Mammary epithelial cell (primary cell): ENCODE measurements at regions of chr14 and their contacts with region 1.

Region 1: DNA sequence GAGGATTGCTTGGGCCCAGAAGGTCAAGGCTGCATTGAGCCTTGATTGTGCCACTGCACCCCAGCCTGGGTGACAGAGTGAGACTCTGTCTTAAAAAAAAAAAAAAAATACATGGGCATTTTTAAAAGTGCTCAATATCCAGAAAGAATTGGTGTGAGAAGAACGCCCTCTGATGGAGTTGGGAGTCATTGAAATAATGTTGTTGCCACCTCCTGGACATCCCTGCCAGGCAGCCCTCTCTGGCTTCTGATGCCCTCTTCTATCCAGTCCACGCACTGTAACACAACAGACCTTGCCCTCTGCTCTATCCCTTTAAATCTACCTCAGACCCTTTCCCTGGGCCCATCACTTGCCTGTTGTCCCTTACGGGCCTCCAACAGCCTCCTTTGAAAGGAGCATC is 4.9 kb downstream of the PTGDR start:
- DNase-seq: peak; percentile 14
- H3K4me3 ChIP-seq: no peak overlapping the region
- H3K27ac ChIP-seq: no peak overlapping the region
- H3K4me1 ChIP-seq: peaks cover 6% of the 10 kb centered on the region
- H3K27me3 ChIP-seq: peaks cover 22% of the 10 kb centered on the region
- CTCF ChIP-seq: peak; percentile 27 to 45

Region 2: DNA sequence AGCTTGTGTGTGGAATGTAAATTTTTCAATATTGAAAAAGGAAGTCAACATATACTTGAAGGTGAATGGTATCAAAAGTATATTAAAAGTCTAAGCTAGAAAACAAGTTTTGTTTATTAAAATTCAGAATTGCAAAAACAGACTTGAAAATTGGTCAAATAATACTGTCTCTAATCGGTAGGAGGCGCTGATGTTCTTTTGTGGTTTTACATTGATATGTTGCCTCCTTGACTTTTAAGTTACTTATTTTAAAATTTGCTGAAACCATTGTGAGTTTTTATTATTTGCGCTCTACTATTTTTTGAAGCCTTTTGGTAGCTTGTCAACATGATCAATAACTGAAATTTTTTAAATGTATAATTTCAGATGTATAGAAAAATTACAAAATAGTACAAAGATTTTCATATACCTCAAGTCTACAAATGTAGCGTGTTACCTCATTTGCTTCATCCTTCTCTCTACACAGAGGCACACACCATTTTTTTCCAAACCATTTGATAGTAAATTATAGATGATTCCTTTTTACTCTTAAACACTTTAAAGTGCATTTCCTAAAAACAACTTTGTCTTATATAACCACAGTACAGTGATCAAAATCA is 276.1 kb before region 1 on chr14:
- CTCF ChIA-PET with region 1: no interaction called
- dilution Hi-C with region 1: no loop called
- in situ Hi-C with region 1: no loop called
- intact Hi-C with region 1: loop called (anchors 2 kb)
- DNase-seq: no peak
- H3K4me3 ChIP-seq: no peak overlapping the region
- H3K27ac ChIP-seq: no peak overlapping the region
- H3K4me1 ChIP-seq: no peaks in the 10 kb centered on the region
- H3K27me3 ChIP-seq: no peaks in the 10 kb centered on the region
- CTCF ChIP-seq: peak; percentile 27 to 48

Region 3: DNA sequence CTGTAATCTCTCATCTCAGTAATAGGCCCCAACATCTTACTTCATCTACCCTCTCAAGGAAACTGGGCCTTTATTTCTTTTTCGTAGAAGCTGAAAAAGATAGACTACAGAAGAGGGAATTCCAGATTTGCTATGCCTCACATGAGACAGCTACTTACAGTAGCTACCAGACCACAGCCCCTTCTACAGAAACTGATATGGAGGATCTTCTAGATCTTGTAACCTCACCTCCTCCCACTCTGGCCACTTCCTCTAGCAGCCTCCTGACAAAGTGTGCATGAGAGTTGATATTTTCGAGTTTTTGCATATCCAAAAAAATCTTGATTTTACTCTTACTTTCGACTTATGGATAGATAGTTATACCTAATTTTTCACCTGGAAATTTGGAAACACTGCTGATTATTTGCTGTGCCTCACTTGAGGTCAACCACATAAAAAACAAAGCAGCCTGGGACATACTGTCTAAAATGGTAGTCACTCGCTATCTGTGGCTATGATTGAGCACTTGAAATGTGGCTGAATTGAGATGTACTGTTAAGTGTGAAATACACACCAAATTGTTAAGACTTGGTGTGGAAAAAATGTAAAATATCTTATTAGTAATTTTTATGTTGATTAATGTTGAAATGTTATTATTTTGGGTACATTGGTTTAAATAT is 117.3 kb before region 1 on chr14:
- CTCF ChIA-PET with region 1: no interaction called
- dilution Hi-C with region 1: no loop called
- in situ Hi-C with region 1: no loop called
- intact Hi-C with region 1: no loop called
- DNase-seq: no peak
- H3K4me3 ChIP-seq: no peak overlapping the region
- H3K27ac ChIP-seq: no peak overlapping the region
- H3K4me1 ChIP-seq: no peaks in the 10 kb centered on the region
- H3K27me3 ChIP-seq: peaks cover 4% of the 10 kb centered on the region
- CTCF ChIP-seq: no peak

Region 4: GRCh38 chr14:52286661-52287649 is 14.6 kb after region 1 on chr14:
- CTCF ChIA-PET with region 1: no interaction called
- dilution Hi-C with region 1: no loop called
- in situ Hi-C with region 1: no loop called
- intact Hi-C with region 1: no loop called
- DNase-seq: no peak
- H3K4me3 ChIP-seq: no peak overlapping the region
- H3K27ac ChIP-seq: no peak overlapping the region
- H3K4me1 ChIP-seq: no peaks in the 10 kb centered on the region
- H3K27me3 ChIP-seq: peaks cover 3% of the 10 kb centered on the region
- CTCF ChIP-seq: no peak

Region 5: DNA sequence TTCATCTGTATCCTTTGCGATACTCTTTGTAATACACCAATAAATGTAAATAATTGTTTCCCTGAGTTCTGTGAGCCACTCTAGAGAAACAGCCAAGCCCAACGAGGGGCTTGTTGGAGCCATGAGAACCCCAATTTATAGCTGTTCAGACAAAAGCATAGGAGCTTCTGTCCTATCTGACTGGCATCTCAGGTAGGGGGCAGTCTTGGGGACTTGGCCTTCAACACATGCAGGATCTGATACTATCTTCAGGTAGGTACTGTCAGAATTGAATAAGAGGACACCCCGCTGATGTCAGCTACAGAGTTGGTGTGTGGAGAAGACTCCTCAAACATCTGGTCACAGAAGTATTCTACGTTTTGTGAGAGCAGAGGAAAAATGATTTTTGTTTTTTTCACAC is 254.7 kb after region 1 on chr14:
- CTCF ChIA-PET with region 1: no interaction called
- dilution Hi-C with region 1: no loop called
- in situ Hi-C with region 1: no loop called
- intact Hi-C with region 1: no loop called
- DNase-seq: no peak
- H3K4me3 ChIP-seq: no peak overlapping the region
- H3K27ac ChIP-seq: no peak overlapping the region
- H3K4me1 ChIP-seq: no peaks in the 10 kb centered on the region
- H3K27me3 ChIP-seq: no peaks in the 10 kb centered on the region
- CTCF ChIP-seq: no peak

Region 6: GRCh38 chr14:52987514-52987913 is 715.1 kb after region 1 on chr14:
- CTCF ChIA-PET with region 1: no interaction called
- dilution Hi-C with region 1: no loop called
- in situ Hi-C with region 1: no loop called
- intact Hi-C with region 1: no loop called
- DNase-seq: no peak
- H3K4me3 ChIP-seq: no peak overlapping the region
- H3K27ac ChIP-seq: no peak overlapping the region
- H3K4me1 ChIP-seq: no peaks in the 10 kb centered on the region
- H3K27me3 ChIP-seq: no peaks in the 10 kb centered on the region
- CTCF ChIP-seq: no peak